Heart right ventricle (tissue), 16 donors: ENCODE measurements at regions of chr4 and their contacts with region 1.

Region 1: GRCh38 chr4:140743194-140743931 is 12.8 kb downstream of the TBC1D9 start:
- DNase-seq: no peak
- ATAC-seq: peak in 5 of 8 donors; percentile 45 to 58 (median 54)
- H3K4me3 ChIP-seq: no peak overlapping the region
- H3K27ac ChIP-seq: peak overlapping the region in 1 of 10 donors; percentile 37
- H3K4me1 ChIP-seq: peaks cover 0 to 57% (median 42%) of the 10 kb centered on the region in 9 donors
- H3K27me3 ChIP-seq: no peaks in the 10 kb centered on the region
- CTCF ChIP-seq: peak in 5 of 9 donors; percentile 22 to 51 (median 36)

Region 2: DNA sequence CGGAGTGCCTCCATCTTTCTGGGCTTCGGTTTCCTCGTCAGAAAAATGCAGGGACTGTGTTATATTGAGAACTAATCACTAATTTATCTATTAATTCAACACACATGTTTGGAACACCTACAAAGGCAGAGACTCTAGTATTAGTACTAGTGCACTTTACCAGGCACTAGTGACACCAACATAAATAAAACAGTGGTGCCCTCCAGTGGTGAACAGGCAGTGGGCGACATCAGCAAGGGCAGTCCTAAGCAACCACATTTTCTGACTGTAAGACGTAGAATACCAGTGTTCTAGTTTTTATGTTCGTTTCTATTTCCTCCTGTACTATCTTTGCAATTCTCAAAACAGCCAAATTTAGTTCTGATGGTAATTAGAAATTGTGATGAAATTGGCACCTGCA is 105.5 kb before region 1 on chr4:
- intact Hi-C with region 1: no loop called
- DNase-seq: no peak
- ATAC-seq: peak in 1 of 8 donors; percentile 43
- H3K4me3 ChIP-seq: no peak overlapping the region
- H3K27ac ChIP-seq: no peak overlapping the region
- H3K4me1 ChIP-seq: peaks cover 0 to 23% (median 13%) of the 10 kb centered on the region in 9 donors
- H3K27me3 ChIP-seq: no peaks in the 10 kb centered on the region
- CTCF ChIP-seq: peak in 8 of 9 donors; percentile 29 to 57 (median 44)

Region 3: DNA sequence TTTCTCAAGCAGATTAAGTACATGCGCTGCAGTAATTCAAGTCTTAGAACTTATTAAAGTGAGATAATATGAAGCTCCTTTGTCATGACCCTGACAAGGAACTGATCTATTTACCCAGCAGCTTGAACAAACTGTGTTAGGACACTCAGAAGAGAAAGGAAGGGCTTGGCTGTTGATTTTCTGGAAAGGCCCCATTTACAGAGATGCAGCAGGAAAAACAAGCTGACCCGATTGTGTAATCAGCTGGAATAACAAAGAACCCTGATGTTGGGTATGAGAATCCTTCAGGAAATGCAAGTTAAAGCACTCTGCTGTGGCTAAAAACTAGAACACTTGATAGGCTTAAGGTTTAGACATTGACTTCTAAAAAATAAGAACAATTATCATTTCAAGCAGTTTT is 52.0 kb before region 1 on chr4:
- intact Hi-C with region 1: loop called in 1 of 10 experiments (anchors 10 kb)
- DNase-seq: no peak
- ATAC-seq: peak; percentile 52 to 87 (median 65)
- H3K4me3 ChIP-seq: no peak overlapping the region
- H3K27ac ChIP-seq: peak overlapping the region in 8 of 10 donors; percentile 23 to 75 (median 46)
- H3K4me1 ChIP-seq: peaks cover 0 to 59% (median 34%) of the 10 kb centered on the region in 9 donors
- H3K27me3 ChIP-seq: no peaks in the 10 kb centered on the region
- CTCF ChIP-seq: no peak